ENCODE measurements at regions of chr12 and their contacts with region 1.

Region 1: GRCh38 chr12:4320853-4321701 is at the start of gene TIGAR:
- DNase-seq: peak; percentile 88 to 94 (median 92)
- H3K4me3 ChIP-seq: peak within 1 kb of the TSS; percentile 97
- H3K4me3 Mint-ChIP-seq: peak within 1 kb of the TSS; percentile 83 to 95 (median 93)
- H3K27ac ChIP-seq: peak within 1 kb of the TSS; percentile 81
- H3K27ac Mint-ChIP-seq: peak within 1 kb of the TSS; percentile 93 to 97 (median 96)
- H3K4me1 ChIP-seq: peaks cover 30% of the 10 kb centered on the region
- H3K4me1 Mint-ChIP-seq: peaks cover 24 to 57% (median 37%) of the 10 kb centered on the region in 4 donors
- H3K27me3 ChIP-seq: no peaks in the 10 kb centered on the region
- H3K27me3 Mint-ChIP-seq: no peaks in the 10 kb centered on the region
- total RNA-seq, gene TIGAR: 15.2 to 17.3 TPM

Region 2: GRCh38 chr12:3872800-3873636 is 448.1 kb before region 1 on chr12 and contains the start of gene PARP11:
- CTCF ChIA-PET with region 1: no interaction called
- POLR2A ChIA-PET with region 1: interaction called, 3 read pairs
- intact Hi-C with region 1: loop called (anchors 2 kb)
- DNase-seq: peak; percentile 97 to 98 (median 97)
- H3K4me3 ChIP-seq: peak within 1 kb of the TSS; percentile 53 to 87
- H3K4me3 Mint-ChIP-seq: peak within 1 kb of the TSS; percentile 95 to 99 (median 98)
- H3K27ac ChIP-seq: peak within 1 kb of the TSS; percentile 95
- H3K27ac Mint-ChIP-seq: peak within 1 kb of the TSS; percentile 95 to 100 (median 99)
- H3K4me1 ChIP-seq: peaks cover 50% of the 10 kb centered on the region
- H3K4me1 Mint-ChIP-seq: peaks cover 34 to 57% (median 40%) of the 10 kb centered on the region in 4 donors
- H3K27me3 ChIP-seq: no peaks in the 10 kb centered on the region
- H3K27me3 Mint-ChIP-seq: no peaks in the 10 kb centered on the region
- total RNA-seq, gene PARP11: 36.4 to 39.9 TPM

Region 3: GRCh38 chr12:4172999-4173398 is 148.1 kb before region 1 on chr12:
- CTCF ChIA-PET with region 1: no interaction called
- POLR2A ChIA-PET with region 1: no interaction called
- intact Hi-C with region 1: no loop called
- DNase-seq: no peak
- H3K4me3 ChIP-seq: no peak overlapping the region
- H3K4me3 Mint-ChIP-seq: no peak overlapping the region
- H3K27ac ChIP-seq: no peak overlapping the region
- H3K27ac Mint-ChIP-seq: no peak overlapping the region
- H3K4me1 ChIP-seq: no peaks in the 10 kb centered on the region
- H3K4me1 Mint-ChIP-seq: peaks cover 7 to 10% (median 9%) of the 10 kb centered on the region in 4 donors
- H3K27me3 ChIP-seq: no peaks in the 10 kb centered on the region
- H3K27me3 Mint-ChIP-seq: no peaks in the 10 kb centered on the region

Region 4: GRCh38 chr12:4293299-4293965 is 27.6 kb before region 1 on chr12:
- CTCF ChIA-PET with region 1: interaction called, 7 read pairs
- POLR2A ChIA-PET with region 1: interaction called, 4 read pairs
- intact Hi-C with region 1: loop called (anchors 1 kb)
- DNase-seq: peak in 3 of 5 donors; percentile 18 to 20 (median 18)
- H3K4me3 ChIP-seq: peak overlapping the region in 1 of 2 donors; percentile 12
- H3K4me3 Mint-ChIP-seq: peak overlapping the region in 7 of 8 donors; percentile 43 to 84 (median 80)
- H3K27ac ChIP-seq: peak overlapping the region; percentile 56
- H3K27ac Mint-ChIP-seq: peak overlapping the region; percentile 89 to 99 (median 96)
- H3K4me1 ChIP-seq: peaks cover 56% of the 10 kb centered on the region
- H3K4me1 Mint-ChIP-seq: peaks cover 47 to 81% (median 70%) of the 10 kb centered on the region in 4 donors
- H3K27me3 ChIP-seq: no peaks in the 10 kb centered on the region
- H3K27me3 Mint-ChIP-seq: no peaks in the 10 kb centered on the region

Region 5: GRCh38 chr12:4506870-4507269 is 185.8 kb after region 1 on chr12:
- CTCF ChIA-PET with region 1: no interaction called
- POLR2A ChIA-PET with region 1: no interaction called
- intact Hi-C with region 1: loop called (anchors 1 kb)
- DNase-seq: peak; percentile 61 to 80 (median 70)
- H3K4me3 ChIP-seq: no peak overlapping the region
- H3K4me3 Mint-ChIP-seq: peak overlapping the region; percentile 43 to 83 (median 60)
- H3K27ac ChIP-seq: peak overlapping the region; percentile 44
- H3K27ac Mint-ChIP-seq: peak overlapping the region; percentile 51 to 94 (median 92)
- H3K4me1 ChIP-seq: peaks cover 23% of the 10 kb centered on the region
- H3K4me1 Mint-ChIP-seq: peaks cover 16 to 27% (median 22%) of the 10 kb centered on the region in 4 donors
- H3K27me3 ChIP-seq: no peaks in the 10 kb centered on the region
- H3K27me3 Mint-ChIP-seq: no peaks in the 10 kb centered on the region

Region 6: DNA sequence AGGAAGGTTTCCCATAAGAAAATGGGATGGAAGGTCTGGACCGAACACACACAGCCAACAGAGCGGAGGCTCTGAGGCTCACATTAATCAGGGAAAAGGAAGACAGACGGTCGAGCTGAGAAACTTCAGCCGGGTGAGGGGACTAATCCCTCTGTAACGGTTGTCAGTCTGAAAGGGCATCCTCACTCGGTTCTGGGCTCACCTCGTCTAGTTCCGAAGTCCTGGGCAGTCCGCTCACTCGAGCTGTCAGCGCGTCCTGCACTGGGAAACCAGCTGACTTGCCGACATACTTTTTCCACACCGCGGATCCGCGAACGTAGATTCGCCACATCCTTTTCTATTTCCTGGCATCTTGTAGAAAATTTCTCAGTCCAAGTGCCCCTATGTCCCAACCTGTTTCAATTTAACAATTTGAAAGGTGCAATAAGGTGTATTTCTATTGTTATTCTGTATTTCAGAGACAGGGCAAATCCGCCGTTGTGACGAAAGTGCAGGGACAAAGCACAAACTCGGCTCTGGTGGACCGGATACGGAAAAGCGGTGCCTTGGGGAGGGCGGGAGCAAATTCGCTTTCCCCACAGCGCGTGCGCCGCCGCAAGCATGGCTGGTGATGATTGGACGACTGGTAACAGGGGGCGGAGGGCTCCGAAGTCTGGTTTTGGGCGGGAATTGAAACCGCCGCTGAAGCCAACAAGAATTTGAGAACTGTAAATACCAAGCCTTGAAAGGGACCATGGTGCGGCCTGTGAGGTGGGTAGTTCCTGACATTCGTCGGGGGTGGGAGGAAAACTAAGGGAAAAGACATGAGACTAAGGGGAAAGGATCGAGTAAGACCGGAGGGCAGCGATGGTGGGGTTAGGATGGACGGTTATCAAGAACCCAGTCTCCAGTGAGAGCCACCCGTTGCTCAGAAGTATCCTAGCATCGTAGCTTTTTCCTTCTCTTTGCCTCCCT is 217.4 kb after region 1 on chr12 and contains the start of gene RAD51AP1:
- CTCF ChIA-PET with region 1: no interaction called
- POLR2A ChIA-PET with region 1: no interaction called
- intact Hi-C with region 1: loop called (anchors 1 kb)
- DNase-seq: peak; percentile 96 to 98 (median 98)
- H3K4me3 ChIP-seq: peak within 1 kb of the TSS; percentile 73 to 90
- H3K4me3 Mint-ChIP-seq: peak within 1 kb of the TSS; percentile 93 to 99 (median 96)
- H3K27ac ChIP-seq: peak within 1 kb of the TSS; percentile 79
- H3K27ac Mint-ChIP-seq: peak within 1 kb of the TSS; percentile 94 to 99 (median 98)
- H3K4me1 ChIP-seq: peaks cover 21% of the 10 kb centered on the region
- H3K4me1 Mint-ChIP-seq: peaks cover 13 to 34% (median 26%) of the 10 kb centered on the region in 4 donors
- H3K27me3 ChIP-seq: no peaks in the 10 kb centered on the region
- H3K27me3 Mint-ChIP-seq: no peaks in the 10 kb centered on the region
- total RNA-seq, gene RAD51AP1: 0.58 to 1.5 TPM

Measured in CD4-positive, alpha-beta memory T cell (primary cell).